Activated CD4-positive, alpha-beta memory T cell treated with anti-CD3 and anti-CD28 coated beads for 36 hours (primary cell): ENCODE measurements at regions of chr10 and their contacts with region 1.

Region 1: DNA sequence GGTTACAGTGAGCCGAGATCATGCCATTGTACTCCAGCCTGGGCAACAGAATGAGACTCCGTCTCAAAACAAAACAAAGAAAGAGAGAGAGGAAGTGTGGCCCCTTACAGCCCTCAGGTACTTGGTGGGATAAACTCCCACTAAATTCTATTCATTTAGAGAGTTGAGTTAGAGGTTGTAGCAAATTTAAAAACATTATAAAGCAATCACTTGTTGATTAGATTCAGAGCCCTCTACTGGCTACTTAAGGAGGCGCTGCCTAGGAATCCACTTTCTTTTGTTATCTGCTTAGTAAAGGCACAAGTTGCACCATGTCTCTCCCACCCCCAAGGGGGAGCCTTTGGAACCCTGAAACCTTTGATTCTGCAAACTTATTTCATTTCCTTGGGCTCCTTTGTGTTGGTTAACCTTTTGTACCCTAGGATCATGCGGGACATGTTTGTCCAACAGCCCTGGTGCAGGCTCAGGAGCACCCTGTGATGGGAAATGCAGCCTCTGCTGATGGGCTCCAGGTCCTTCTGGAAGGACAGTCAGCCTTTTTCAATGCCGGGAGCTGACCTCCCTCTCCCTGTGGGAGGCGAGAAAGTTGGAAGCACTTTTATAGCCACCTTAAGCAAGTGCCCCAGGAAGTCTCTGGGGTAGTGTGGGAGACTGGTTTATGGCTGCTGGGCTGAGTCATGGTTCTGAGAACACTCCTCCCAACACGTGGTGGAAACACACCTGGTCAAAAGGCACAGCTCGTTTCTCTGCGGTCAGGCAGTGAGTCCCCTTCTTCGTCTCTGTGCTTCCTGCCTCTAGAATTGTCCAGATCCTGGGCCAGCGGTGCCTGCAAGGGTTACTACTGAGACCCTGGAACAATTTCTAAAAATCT is 2.3 kb downstream of the HKDC1 start:
- DNase-seq: peak; percentile 92
- H3K4me3 Mint-ChIP-seq: peak overlapping the region; percentile 55
- H3K27ac Mint-ChIP-seq: peak overlapping the region; percentile 91
- H3K4me1 Mint-ChIP-seq: peaks cover 44% of the 10 kb centered on the region
- H3K27me3 Mint-ChIP-seq: no peaks in the 10 kb centered on the region

Region 2: GRCh38 chr10:68997211-68997610 is 225.2 kb before region 1 on chr10:
- CTCF ChIA-PET with region 1: no interaction called
- POLR2A ChIA-PET with region 1: no interaction called
- intact Hi-C with region 1: loop called (anchors 2 kb)
- DNase-seq: peak; percentile 33
- H3K4me3 Mint-ChIP-seq: peak overlapping the region; percentile 40
- H3K27ac Mint-ChIP-seq: peak overlapping the region; percentile 94
- H3K4me1 Mint-ChIP-seq: peaks cover 52% of the 10 kb centered on the region
- H3K27me3 Mint-ChIP-seq: no peaks in the 10 kb centered on the region

Region 3: GRCh38 chr10:69087590-69088470 is 134.6 kb before region 1 on chr10 and contains the start of gene SRGN:
- CTCF ChIA-PET with region 1: no interaction called
- POLR2A ChIA-PET with region 1: interaction called, 5 read pairs
- intact Hi-C with region 1: loop called (anchors 1 kb)
- DNase-seq: peak; percentile 87
- H3K4me3 Mint-ChIP-seq: peak within 1 kb of the TSS; percentile 94
- H3K27ac Mint-ChIP-seq: peak within 1 kb of the TSS; percentile 96
- H3K4me1 Mint-ChIP-seq: peaks cover 41% of the 10 kb centered on the region
- H3K27me3 Mint-ChIP-seq: no peaks in the 10 kb centered on the region
- total RNA-seq, gene SRGN: 949 to 966 TPM

Region 4: GRCh38 chr10:69179743-69180524 is 42.5 kb before region 1 on chr10 and contains the start of gene SUPV3L1:
- CTCF ChIA-PET with region 1: no interaction called
- POLR2A ChIA-PET with region 1: interaction called, 4 read pairs
- intact Hi-C with region 1: loop called (anchors 1 kb)
- DNase-seq: peak; percentile 91
- H3K4me3 Mint-ChIP-seq: peak within 1 kb of the TSS; percentile 87
- H3K27ac Mint-ChIP-seq: peak within 1 kb of the TSS; percentile 100
- H3K4me1 Mint-ChIP-seq: peaks cover 45% of the 10 kb centered on the region
- H3K27me3 Mint-ChIP-seq: no peaks in the 10 kb centered on the region
- total RNA-seq, gene SUPV3L1: 45.0 to 47.6 TPM

Region 5: GRCh38 chr10:69262292-69262751 is 39.9 kb after region 1 on chr10:
- CTCF ChIA-PET with region 1: interaction called, 3 read pairs
- POLR2A ChIA-PET with region 1: no interaction called
- intact Hi-C with region 1: loop called (anchors 1 kb)
- DNase-seq: no peak
- H3K4me3 Mint-ChIP-seq: no peak overlapping the region
- H3K27ac Mint-ChIP-seq: peak overlapping the region; percentile 55
- H3K4me1 Mint-ChIP-seq: peaks cover 18% of the 10 kb centered on the region
- H3K27me3 Mint-ChIP-seq: no peaks in the 10 kb centered on the region

Region 6: GRCh38 chr10:69464801-69465401 is 242.5 kb after region 1 on chr10:
- CTCF ChIA-PET with region 1: no interaction called
- POLR2A ChIA-PET with region 1: no interaction called
- intact Hi-C with region 1: no loop called
- DNase-seq: peak; percentile 16
- H3K4me3 Mint-ChIP-seq: no peak overlapping the region
- H3K27ac Mint-ChIP-seq: peak overlapping the region; percentile 62
- H3K4me1 Mint-ChIP-seq: peaks cover 28% of the 10 kb centered on the region
- H3K27me3 Mint-ChIP-seq: no peaks in the 10 kb centered on the region